ENCODE measurements at regions of chr7 and their contacts with region 1.

Region 1: DNA sequence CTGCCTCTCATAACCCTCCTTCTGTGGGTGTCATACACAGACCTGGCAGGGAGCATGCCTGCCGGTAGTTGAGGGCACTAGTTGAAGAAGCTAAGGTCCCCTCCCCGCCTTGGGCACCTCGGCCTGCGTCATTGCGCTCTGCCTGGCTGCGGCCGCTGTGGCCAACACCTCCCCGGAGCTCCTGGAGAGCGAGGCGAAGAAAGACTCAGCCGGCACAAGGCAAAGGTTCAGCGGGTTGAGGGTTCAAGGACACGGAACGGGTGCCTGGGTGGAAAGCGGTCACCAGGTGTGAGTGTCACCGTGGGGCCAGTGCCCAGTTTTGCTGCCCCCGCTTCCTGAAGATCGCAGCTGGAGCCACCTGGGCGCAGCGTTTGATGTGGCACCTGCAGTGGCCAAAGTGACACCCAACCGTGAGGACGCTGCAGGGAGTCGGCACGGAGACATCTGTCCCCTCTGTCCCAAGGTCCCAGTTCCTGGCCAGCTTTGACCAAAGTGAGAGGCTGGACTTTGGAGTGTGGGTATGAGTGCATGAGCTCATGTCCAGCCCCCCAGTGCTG is 14.8 kb upstream of the ZNF735 start:
- DNase-seq: no peak
- H3K4me3 ChIP-seq: no peak overlapping the region
- H3K27ac ChIP-seq: no peak overlapping the region
- H3K4me1 ChIP-seq: no peaks in the 10 kb centered on the region
- H3K27me3 ChIP-seq: no peaks in the 10 kb centered on the region
- CTCF ChIP-seq: no peak

Region 2: DNA sequence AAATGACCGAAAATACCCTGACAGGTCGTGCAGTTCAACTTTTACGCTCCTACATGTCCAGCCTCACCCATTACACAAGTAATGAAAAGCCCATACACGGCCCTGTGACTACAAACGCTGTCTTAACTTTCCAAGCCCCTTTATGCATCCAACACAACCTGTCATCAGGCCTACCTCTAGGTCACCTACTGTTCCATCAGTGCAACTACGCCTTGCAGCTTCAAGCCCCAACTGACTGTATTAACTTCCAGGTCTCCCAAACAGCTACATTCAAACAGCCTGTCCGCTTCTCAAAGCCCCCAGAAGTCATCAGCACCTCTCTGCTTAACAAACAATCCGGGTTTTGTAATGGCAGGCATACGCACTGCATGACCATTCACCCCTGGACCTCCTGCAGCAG is 492.9 kb after region 1 on chr7:
- CTCF ChIA-PET with region 1: no interaction called
- POLR2A ChIA-PET with region 1: interaction called, 13 read pairs
- intact Hi-C with region 1: no loop called
- DNase-seq: no peak
- H3K4me3 ChIP-seq: no peak overlapping the region
- H3K27ac ChIP-seq: no peak overlapping the region
- H3K4me1 ChIP-seq: peaks cover 9% of the 10 kb centered on the region
- H3K27me3 ChIP-seq: no peaks in the 10 kb centered on the region
- CTCF ChIP-seq: no peak

Measured in PC-9 (cell line).